B cell (primary cell): ENCODE measurements at regions of chr5 and their contacts with region 1.

Region 1: DNA sequence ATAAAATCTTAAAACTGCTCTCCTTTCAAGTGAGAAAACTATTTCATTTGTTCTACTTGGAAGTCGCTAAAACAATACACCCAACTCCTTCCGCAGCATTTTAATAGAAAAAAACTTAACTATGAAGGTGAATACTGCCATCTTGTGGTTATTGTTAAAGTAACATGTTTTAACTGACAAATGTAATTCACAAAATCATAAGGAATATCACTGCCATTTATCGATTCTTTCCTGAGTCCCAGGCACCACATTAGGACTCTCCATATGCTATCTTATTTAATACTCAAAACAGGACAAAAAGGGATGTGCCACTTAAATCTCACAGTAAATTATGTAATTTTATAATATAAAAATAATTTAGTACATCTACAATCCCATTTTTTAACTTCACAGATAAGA is 130.5 kb upstream of the ITGA1 start:
- DNase-seq: peak; percentile 38
- ATAC-seq: no peak
- H3K4me3 ChIP-seq: no peak overlapping the region
- H3K4me3 Mint-ChIP-seq: no peak overlapping the region
- H3K27ac ChIP-seq: no peak overlapping the region
- H3K27ac Mint-ChIP-seq: no peak overlapping the region
- H3K4me1 ChIP-seq: no peaks in the 10 kb centered on the region
- H3K4me1 Mint-ChIP-seq: no peaks in the 10 kb centered on the region
- H3K27me3 ChIP-seq: peaks cover 0 to 2% (median 0%) of the 10 kb centered on the region in 4 experiments
- H3K27me3 Mint-ChIP-seq: peaks cover 12% of the 10 kb centered on the region
- CTCF ChIP-seq: peak; percentile 83

Region 2: GRCh38 chr5:50962934-50963872 is 1694.0 kb before region 1 on chr5:
- CTCF ChIA-PET with region 1: interaction called, 13 read pairs
- POLR2A ChIA-PET with region 1: no interaction called
- intact Hi-C with region 1: loop called (anchors 1 kb)
- DNase-seq: peak; percentile 68
- ATAC-seq: peak; percentile 75
- H3K4me3 ChIP-seq: peak overlapping the region; percentile 31 to 68 (median 47)
- H3K4me3 Mint-ChIP-seq: peak overlapping the region; percentile 86
- H3K27ac ChIP-seq: no peak overlapping the region
- H3K27ac Mint-ChIP-seq: no peak overlapping the region
- H3K4me1 ChIP-seq: peaks cover 42 to 43% of the 10 kb centered on the region in 2 donors
- H3K4me1 Mint-ChIP-seq: peaks cover 41% of the 10 kb centered on the region
- H3K27me3 ChIP-seq: peaks cover 1 to 62% (median 43%) of the 10 kb centered on the region in 4 experiments
- H3K27me3 Mint-ChIP-seq: peaks cover 60% of the 10 kb centered on the region
- CTCF ChIP-seq: peak; percentile 87